PC-3 (cell line): ENCODE measurements at regions of chrX and their contacts with region 1.

Region 1: DNA sequence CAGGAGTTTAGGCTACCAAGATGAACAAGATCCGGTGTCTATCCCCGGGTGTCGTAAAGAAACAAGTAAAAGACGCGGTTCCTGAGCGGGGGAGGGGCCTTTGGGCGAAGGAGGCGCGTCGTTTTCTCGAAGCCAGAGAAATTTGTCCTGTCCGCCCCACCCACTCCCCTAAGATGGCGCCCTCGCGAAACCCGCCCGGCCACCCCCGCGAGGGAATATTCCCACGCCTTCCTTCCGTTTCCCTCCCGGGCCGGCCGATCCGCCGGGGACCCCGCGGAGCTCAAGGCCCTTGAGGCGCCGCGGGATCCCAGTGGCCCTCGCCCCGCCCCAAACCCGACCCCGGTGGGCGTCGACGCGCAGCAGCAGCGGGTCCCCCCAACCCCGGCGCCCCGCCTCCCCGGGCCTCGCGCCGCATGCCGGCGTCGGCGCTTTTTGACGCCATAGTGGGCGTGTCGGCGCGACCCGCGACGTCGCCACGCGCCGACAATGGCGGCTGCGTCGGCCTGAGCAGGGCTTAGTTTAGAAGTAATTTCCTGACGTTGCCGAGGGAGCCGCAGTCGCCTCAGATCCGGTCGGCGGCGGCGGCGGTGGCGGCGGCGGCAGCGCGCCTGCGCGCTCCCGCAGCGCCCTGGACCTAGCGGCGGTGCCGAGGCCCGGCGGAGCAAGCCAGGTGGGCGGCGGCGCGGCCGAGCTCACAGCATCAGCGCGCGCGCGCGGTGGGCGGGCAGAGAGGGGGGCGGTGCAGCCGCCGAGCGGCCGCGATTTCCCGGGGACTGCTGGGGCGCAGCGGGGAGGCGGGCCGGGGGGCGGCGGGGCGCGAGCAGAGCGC is at the start of gene HTATSF1:
- DNase-seq: peak; percentile 89
- ATAC-seq: peak; percentile 80
- H3K4me3 ChIP-seq: peak within 1 kb of the TSS; percentile 99
- H3K27ac ChIP-seq: peak within 1 kb of the TSS; percentile 95
- H3K4me1 ChIP-seq: no peaks in the 10 kb centered on the region
- H3K27me3 ChIP-seq: no peaks in the 10 kb centered on the region
- CTCF ChIP-seq: no peak
- total RNA-seq, gene HTATSF1: 74.7 and 97.9 TPM in 2 replicates

Region 2: GRCh38 chrX:136447968-136448367 is 49.0 kb before region 1 on chrX:
- CTCF ChIA-PET with region 1: no interaction called
- POLR2A ChIA-PET with region 1: no interaction called
- intact Hi-C with region 1: no loop called
- DNase-seq: no peak
- ATAC-seq: no peak
- H3K4me3 ChIP-seq: no peak overlapping the region
- H3K27ac ChIP-seq: no peak overlapping the region
- H3K4me1 ChIP-seq: peaks cover 29% of the 10 kb centered on the region
- H3K27me3 ChIP-seq: no peaks in the 10 kb centered on the region
- CTCF ChIP-seq: no peak

Region 3: GRCh38 chrX:136525738-136526606 is 29.0 kb after region 1 on chrX:
- CTCF ChIA-PET with region 1: no interaction called
- POLR2A ChIA-PET with region 1: interaction called, 35 read pairs
- intact Hi-C with region 1: no loop called
- DNase-seq: peak; percentile 95
- ATAC-seq: peak; percentile 84
- H3K4me3 ChIP-seq: peak overlapping the region; percentile 56
- H3K27ac ChIP-seq: peak overlapping the region; percentile 88
- H3K4me1 ChIP-seq: peaks cover 42% of the 10 kb centered on the region
- H3K27me3 ChIP-seq: no peaks in the 10 kb centered on the region
- CTCF ChIP-seq: no peak

Region 4: DNA sequence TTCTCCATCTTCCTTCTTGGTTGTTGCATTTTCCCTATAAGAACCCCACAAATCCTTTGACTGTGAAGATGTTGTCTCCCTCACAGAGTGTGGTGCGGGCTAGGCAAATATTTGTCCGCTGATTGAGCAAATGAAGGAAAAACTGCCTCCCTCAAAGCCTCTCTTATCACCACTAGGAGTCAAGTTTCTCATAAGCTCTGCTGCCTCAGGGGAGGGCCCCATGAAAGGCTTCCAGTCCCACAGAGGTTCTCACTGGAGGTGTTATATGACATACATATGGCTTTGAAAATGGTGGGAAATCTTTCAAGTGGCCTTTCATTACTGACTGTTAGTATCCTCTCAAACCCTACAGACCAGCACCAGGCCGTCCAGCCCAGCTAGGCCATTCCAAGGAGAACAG is 44.3 kb after region 1 on chrX:
- CTCF ChIA-PET with region 1: no interaction called
- POLR2A ChIA-PET with region 1: no interaction called
- intact Hi-C with region 1: no loop called
- DNase-seq: no peak
- ATAC-seq: no peak
- H3K4me3 ChIP-seq: no peak overlapping the region
- H3K27ac ChIP-seq: no peak overlapping the region
- H3K4me1 ChIP-seq: no peaks in the 10 kb centered on the region
- H3K27me3 ChIP-seq: no peaks in the 10 kb centered on the region
- CTCF ChIP-seq: no peak

Region 5: DNA sequence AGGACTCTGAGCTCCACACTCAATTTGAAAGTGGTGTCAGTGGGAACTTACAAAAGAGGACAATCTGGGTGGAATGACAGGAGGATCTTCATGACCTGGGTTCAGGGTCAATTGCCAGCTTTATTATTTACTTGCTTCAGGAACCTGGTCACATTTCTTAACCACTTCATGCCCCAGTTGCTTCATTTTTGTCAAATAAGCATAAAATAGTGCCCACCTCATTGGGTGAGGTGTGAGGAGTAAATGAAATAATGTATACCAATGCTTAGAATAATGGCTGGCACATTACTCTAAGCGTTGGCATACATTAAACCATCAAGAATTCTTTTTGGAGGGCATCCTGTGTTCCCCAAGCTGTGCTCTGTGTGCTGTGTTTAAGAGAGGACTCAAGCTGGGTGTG is 54.4 kb after region 1 on chrX:
- CTCF ChIA-PET with region 1: interaction called, 12 read pairs
- POLR2A ChIA-PET with region 1: no interaction called
- intact Hi-C with region 1: no loop called
- DNase-seq: no peak
- ATAC-seq: no peak
- H3K4me3 ChIP-seq: no peak overlapping the region
- H3K27ac ChIP-seq: no peak overlapping the region
- H3K4me1 ChIP-seq: no peaks in the 10 kb centered on the region
- H3K27me3 ChIP-seq: no peaks in the 10 kb centered on the region
- CTCF ChIP-seq: no peak

Region 6: GRCh38 chrX:136577552-136577951 is 80.6 kb after region 1 on chrX:
- CTCF ChIA-PET with region 1: no interaction called
- POLR2A ChIA-PET with region 1: interaction called, 3 read pairs
- intact Hi-C with region 1: loop called (anchors 2 kb)
- DNase-seq: peak; percentile 69
- ATAC-seq: peak; percentile 99
- H3K4me3 ChIP-seq: no peak overlapping the region
- H3K27ac ChIP-seq: no peak overlapping the region
- H3K4me1 ChIP-seq: peaks cover 12% of the 10 kb centered on the region; the same call in 1 of the 2 replicates
- H3K27me3 ChIP-seq: no peaks in the 10 kb centered on the region
- CTCF ChIP-seq: peak; percentile 76